Naive thymus-derived CD8-positive, alpha-beta T cell (primary cell): ENCODE measurements at regions of chr4 and their contacts with region 1.

Region 1: GRCh38 chr4:47463235-47463956 is at the start of gene COMMD8:
- DNase-seq: peak; percentile 93 to 99 (median 97)
- ATAC-seq: peak; percentile 88 to 92
- H3K4me3 Mint-ChIP-seq: peak within 1 kb of the TSS; percentile 87 to 95 (median 90)
- H3K27ac Mint-ChIP-seq: peak within 1 kb of the TSS; percentile 89 to 99 (median 96)
- H3K4me1 Mint-ChIP-seq: peaks cover 15 to 48% (median 44%) of the 10 kb centered on the region in 4 donors
- H3K27me3 Mint-ChIP-seq: no peaks in the 10 kb centered on the region
- polyA plus RNA-seq, gene COMMD8: 42.5 to 61.5 (median 52.7) TPM

Region 2: GRCh38 chr4:47485047-47485692 is 21.8 kb after region 1 on chr4 and contains the start of gene ATP10D:
- POLR2A ChIA-PET with region 1: interaction called, 28 read pairs
- DNase-seq: peak; percentile 56 to 85 (median 68)
- ATAC-seq: peak; percentile 93 to 97
- H3K4me3 Mint-ChIP-seq: peak within 1 kb of the TSS; percentile 92 to 99 (median 96)
- H3K27ac Mint-ChIP-seq: peak within 1 kb of the TSS; percentile 94 to 98 (median 96)
- H3K4me1 Mint-ChIP-seq: peaks cover 10 to 51% (median 30%) of the 10 kb centered on the region in 4 donors
- H3K27me3 Mint-ChIP-seq: no peaks in the 10 kb centered on the region
- polyA plus RNA-seq, gene ATP10D: 2.7 to 5.1 (median 3.8) TPM

Region 3: GRCh38 chr4:47598320-47598719 is 134.9 kb after region 1 on chr4:
- POLR2A ChIA-PET with region 1: no interaction called
- DNase-seq: no peak
- ATAC-seq: no peak
- H3K4me3 Mint-ChIP-seq: no peak overlapping the region
- H3K27ac Mint-ChIP-seq: no peak overlapping the region
- H3K4me1 Mint-ChIP-seq: no peaks in the 10 kb centered on the region
- H3K27me3 Mint-ChIP-seq: no peaks in the 10 kb centered on the region

Region 4: GRCh38 chr4:47668810-47669408 is 205.5 kb after region 1 on chr4:
- POLR2A ChIA-PET with region 1: no interaction called
- DNase-seq: peak in 5 of 10 donors; percentile 9 to 51 (median 28)
- ATAC-seq: peak in 1 of 2 donors; percentile 64
- H3K4me3 Mint-ChIP-seq: no peak overlapping the region
- H3K27ac Mint-ChIP-seq: no peak overlapping the region
- H3K4me1 Mint-ChIP-seq: peaks cover 0 to 2% (median 0%) of the 10 kb centered on the region in 4 donors
- H3K27me3 Mint-ChIP-seq: peaks cover 8 to 21% (median 16%) of the 10 kb centered on the region in 5 donors